HCT116 (cell line): ENCODE measurements at regions of chr11 and their contacts with region 1.

Region 1: DNA sequence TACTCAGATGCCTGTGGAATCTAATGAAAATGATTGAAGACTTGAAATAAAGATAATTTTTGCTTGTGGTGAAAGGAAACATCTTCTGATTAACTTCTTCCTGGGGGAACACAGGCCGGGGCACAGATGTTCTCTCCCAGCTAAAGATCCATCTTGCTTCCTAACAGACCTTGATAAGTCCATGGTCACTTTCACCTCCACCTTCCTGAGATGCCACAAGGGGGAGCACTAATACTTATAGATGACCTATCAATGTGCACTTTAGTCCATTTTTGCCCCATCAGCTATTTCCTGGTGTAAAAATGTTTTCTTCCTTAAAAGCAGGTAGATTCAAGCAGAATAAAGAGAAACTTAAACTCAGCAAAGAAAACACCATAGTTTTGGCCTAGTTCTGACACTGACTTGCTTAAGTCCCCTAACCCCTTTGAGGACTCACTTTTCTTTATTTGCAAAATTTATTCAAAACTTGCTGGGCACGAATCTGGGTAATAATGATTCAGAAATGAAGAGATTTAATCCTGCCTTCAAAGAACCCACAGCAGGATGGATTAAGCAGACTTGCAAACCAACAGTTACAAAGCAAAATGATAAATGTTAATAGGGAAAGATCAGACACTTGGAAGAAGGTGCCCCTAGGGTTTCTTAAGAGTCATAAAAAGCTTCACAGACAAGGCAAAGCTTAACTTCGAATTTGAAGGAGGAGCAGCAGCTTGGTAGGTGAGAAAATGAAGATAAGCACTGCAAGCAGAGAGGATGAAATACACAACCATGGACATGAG is 158.7 kb downstream of the RAB38 start:
- DNase-seq: peak; percentile 78
- ATAC-seq: peak; percentile 98
- H3K4me3 ChIP-seq: no peak overlapping the region
- H3K27ac ChIP-seq: no peak overlapping the region
- H3K4me1 ChIP-seq: no peaks in the 10 kb centered on the region
- H3K27me3 ChIP-seq: no peaks in the 10 kb centered on the region
- CTCF ChIP-seq: peak; percentile 72 to 82 (median 82)
- POLR2A ChIP-seq: no peak
- RAD21 ChIP-seq: peak; percentile 92

Region 2: GRCh38 chr11:88552377-88553062 is 535.9 kb after region 1 on chr11:
- CTCF ChIA-PET with region 1: interaction called, 32 read pairs
- POLR2A ChIA-PET with region 1: interaction called, 3 read pairs
- RAD21 ChIA-PET with region 1: no interaction called
- intact Hi-C with region 1: no loop called
- DNase-seq: peak; percentile 48
- ATAC-seq: peak; percentile 83
- H3K4me3 ChIP-seq: no peak overlapping the region
- H3K27ac ChIP-seq: no peak overlapping the region
- H3K4me1 ChIP-seq: peaks cover 9 to 26% of the 10 kb centered on the region in 2 experiments; a peak in 3 of 4 replicates
- H3K27me3 ChIP-seq: no peaks in the 10 kb centered on the region
- CTCF ChIP-seq: peak; percentile 44 to 90 (median 88); a peak in 5 of 6 replicates
- POLR2A ChIP-seq: no peak
- RAD21 ChIP-seq: peak; percentile 72